Endothelial cell of umbilical vein (primary cell): ENCODE measurements at regions of chr6 and their contacts with region 1.

Region 1: DNA sequence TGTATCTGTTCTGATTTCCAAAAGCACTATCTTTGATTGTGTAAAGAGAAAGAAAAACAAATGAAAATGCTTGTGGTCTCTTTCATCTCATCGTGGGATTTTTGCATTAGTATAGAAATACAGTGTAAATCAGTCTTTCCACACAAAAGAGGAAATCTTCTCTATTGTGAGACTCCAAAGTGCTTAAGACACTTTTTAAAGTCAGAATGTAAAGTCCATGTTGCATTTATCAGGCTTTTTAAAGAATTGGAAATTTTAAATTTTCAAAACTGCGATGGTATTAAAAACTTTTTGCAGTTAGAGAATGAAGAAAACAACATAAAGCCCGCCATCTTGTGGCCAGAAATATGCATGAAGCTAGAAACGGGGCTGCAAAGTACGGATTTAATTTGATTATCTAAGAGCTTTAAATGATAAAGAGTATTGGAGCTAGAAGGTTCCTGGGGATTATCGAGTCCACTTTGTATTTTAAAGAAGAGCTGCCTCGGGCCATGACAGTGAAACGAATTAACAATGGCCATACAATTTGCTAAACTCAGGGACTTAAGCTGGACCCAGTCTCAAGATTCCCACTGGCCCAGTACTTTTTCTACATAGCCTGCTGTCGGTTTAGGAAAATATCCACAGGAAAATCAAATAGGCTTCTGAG is 339.6 kb downstream of the ARHGAP18 start:
- DNase-seq: peak; percentile 65
- H3K4me3 ChIP-seq: no peak overlapping the region
- H3K27ac ChIP-seq: no peak overlapping the region
- H3K4me1 ChIP-seq: no peaks in the 10 kb centered on the region
- H3K27me3 ChIP-seq: no peaks in the 10 kb centered on the region
- CTCF ChIP-seq: peak; percentile 42 to 55
- POLR2A ChIP-seq: no peak

Region 2: GRCh38 chr6:127737009-127737486 is 1633.3 kb before region 1 on chr6:
- CTCF ChIA-PET with region 1: interaction called, 16 read pairs
- POLR2A ChIA-PET with region 1: no interaction called
- dilution Hi-C with region 1: no loop called
- intact Hi-C with region 1: loop called (anchors 5 kb)
- DNase-seq: peak; percentile 79
- H3K4me3 ChIP-seq: no peak overlapping the region
- H3K27ac ChIP-seq: no peak overlapping the region
- H3K4me1 ChIP-seq: no peaks in the 10 kb centered on the region
- H3K27me3 ChIP-seq: peaks cover 1 to 4% of the 10 kb centered on the region in 2 experiments
- CTCF ChIP-seq: peak; percentile 31 to 46
- POLR2A ChIP-seq: no peak

Region 3: GRCh38 chr6:128731249-128732165 is 638.9 kb before region 1 on chr6:
- CTCF ChIA-PET with region 1: interaction called, 11 read pairs
- POLR2A ChIA-PET with region 1: no interaction called
- dilution Hi-C with region 1: no loop called
- intact Hi-C with region 1: loop called (anchors 5 kb)
- DNase-seq: peak; percentile 69
- H3K4me3 ChIP-seq: no peak overlapping the region
- H3K27ac ChIP-seq: no peak overlapping the region
- H3K4me1 ChIP-seq: no peaks in the 10 kb centered on the region
- H3K27me3 ChIP-seq: peaks cover 0 to 5% of the 10 kb centered on the region in 2 experiments
- CTCF ChIP-seq: peak; percentile 51 to 68
- POLR2A ChIP-seq: no peak

Region 4: GRCh38 chr6:128981716-128982115 is 388.7 kb before region 1 on chr6:
- CTCF ChIA-PET with region 1: interaction called, 7 read pairs
- POLR2A ChIA-PET with region 1: no interaction called
- dilution Hi-C with region 1: no loop called
- intact Hi-C with region 1: loop called (anchors 10 kb)
- DNase-seq: no peak
- H3K4me3 ChIP-seq: no peak overlapping the region
- H3K27ac ChIP-seq: no peak overlapping the region
- H3K4me1 ChIP-seq: no peaks in the 10 kb centered on the region
- H3K27me3 ChIP-seq: no peaks in the 10 kb centered on the region
- CTCF ChIP-seq: no peak
- POLR2A ChIP-seq: no peak

Region 5: DNA sequence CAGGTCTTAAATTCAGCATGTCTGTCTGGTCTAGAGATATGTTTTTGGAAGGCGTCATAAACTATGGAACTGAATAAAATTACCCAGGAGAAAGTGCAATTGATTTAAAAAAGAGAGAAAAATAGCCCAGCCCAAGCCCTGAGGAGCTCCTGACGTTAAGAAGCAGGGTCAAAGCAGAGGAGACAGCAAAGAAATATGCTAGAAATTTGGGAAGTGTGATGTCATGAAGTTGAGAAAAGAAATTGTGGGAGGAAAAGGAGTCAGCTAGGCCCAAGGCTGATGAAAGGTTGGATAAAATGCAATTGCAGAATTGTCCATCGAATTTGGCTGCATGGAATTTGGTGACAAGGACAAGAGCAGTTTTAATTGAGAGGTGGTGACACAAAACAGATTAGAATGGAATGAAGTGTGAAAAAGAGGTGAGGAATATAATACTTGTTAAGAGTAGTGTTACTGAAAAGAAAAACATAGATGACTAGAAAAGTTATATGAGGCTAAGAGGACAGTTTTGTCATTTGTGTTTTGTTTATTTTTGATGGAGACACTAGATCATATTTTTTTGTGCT is 105.8 kb before region 1 on chr6:
- CTCF ChIA-PET with region 1: interaction called, 25 read pairs
- POLR2A ChIA-PET with region 1: no interaction called
- dilution Hi-C with region 1: no loop called
- intact Hi-C with region 1: no loop called
- DNase-seq: no peak
- H3K4me3 ChIP-seq: no peak overlapping the region
- H3K27ac ChIP-seq: no peak overlapping the region
- H3K4me1 ChIP-seq: no peaks in the 10 kb centered on the region
- H3K27me3 ChIP-seq: peaks cover 6 to 24% of the 10 kb centered on the region in 2 experiments
- CTCF ChIP-seq: no peak
- POLR2A ChIP-seq: no peak

Region 6: DNA sequence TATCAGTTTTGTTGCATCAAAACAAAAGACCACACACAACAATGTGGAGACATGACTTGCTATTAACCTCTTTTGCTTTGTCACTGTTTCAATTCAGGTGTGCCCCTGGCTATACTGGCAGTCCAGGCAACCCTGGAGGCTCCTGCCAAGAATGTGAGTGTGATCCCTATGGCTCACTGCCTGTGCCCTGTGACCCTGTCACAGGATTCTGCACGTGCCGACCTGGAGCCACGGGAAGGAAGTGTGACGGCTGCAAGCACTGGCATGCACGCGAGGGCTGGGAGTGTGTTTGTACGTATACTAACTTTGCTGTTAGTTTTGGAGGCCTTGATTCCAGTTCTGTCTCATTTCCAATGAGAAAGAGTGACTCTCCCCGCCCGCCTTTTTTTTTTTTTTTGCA is 17.3 kb before region 1 on chr6:
- CTCF ChIA-PET with region 1: interaction called, 16 read pairs
- POLR2A ChIA-PET with region 1: no interaction called
- dilution Hi-C with region 1: no loop called
- intact Hi-C with region 1: no loop called
- DNase-seq: peak; percentile 80
- H3K4me3 ChIP-seq: no peak overlapping the region
- H3K27ac ChIP-seq: peak overlapping the region; percentile 60
- H3K4me1 ChIP-seq: peaks cover 11% of the 10 kb centered on the region
- H3K27me3 ChIP-seq: no peaks in the 10 kb centered on the region
- CTCF ChIP-seq: no peak
- POLR2A ChIP-seq: no peak

Region 7: GRCh38 chr6:129575378-129576118 is 205.2 kb after region 1 on chr6:
- CTCF ChIA-PET with region 1: interaction called, 3 read pairs
- POLR2A ChIA-PET with region 1: no interaction called
- dilution Hi-C with region 1: no loop called
- intact Hi-C with region 1: loop called (anchors 5 kb)
- DNase-seq: peak; percentile 72
- H3K4me3 ChIP-seq: peak overlapping the region in 1 of 3 experiments; percentile 19
- H3K27ac ChIP-seq: peak overlapping the region; percentile 80
- H3K4me1 ChIP-seq: peaks cover 32% of the 10 kb centered on the region
- H3K27me3 ChIP-seq: no peaks in the 10 kb centered on the region
- CTCF ChIP-seq: peak; percentile 50 to 54
- POLR2A ChIP-seq: no peak